SK-MEL-5 (cell line): ENCODE measurements at regions of chr3 and their contacts with region 1.

Region 1: GRCh38 chr3:73056014-73056844 is 5.2 kb upstream of the EBLN2 start:
- DNase-seq: peak; percentile 67

Region 2: DNA sequence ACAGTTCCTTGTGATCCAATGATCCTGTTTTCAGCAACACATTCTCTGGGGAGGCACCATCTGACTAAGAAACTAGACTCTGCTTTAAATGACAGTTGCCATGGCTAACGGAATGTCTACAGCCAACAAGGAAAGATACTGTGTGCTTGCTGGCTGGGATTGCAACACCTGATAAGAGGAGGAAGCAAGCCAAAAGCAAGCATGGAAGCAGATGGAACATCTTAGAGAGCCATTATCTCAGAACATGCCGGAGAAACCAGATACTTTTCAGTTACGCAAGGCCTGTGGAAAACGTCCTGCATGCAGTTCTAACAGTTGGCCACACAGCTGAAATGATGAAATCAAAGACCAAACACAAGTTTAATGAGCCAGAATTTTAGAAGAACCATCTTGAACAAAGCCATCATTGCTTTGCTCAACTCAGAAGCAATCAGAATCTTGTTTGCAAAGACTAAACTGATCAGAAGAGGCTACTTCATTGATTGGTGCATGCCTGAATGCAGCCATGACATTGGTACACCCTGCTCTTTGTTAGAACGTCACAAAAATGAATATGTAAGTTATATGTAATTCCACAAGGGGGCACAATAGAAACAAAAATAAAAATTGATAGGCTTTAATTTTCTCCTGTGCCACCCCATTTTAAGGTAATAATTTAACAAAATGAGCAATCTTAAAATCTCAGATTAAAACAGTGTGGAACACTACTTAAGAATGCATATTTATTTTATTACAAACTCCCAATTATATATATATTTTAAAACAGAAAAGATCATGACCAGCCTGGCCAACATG is 117.6 kb before region 1 on chr3:
- in situ Hi-C with region 1: loop called (anchors 25 kb)
- DNase-seq: peak; percentile 83

Region 3: DNA sequence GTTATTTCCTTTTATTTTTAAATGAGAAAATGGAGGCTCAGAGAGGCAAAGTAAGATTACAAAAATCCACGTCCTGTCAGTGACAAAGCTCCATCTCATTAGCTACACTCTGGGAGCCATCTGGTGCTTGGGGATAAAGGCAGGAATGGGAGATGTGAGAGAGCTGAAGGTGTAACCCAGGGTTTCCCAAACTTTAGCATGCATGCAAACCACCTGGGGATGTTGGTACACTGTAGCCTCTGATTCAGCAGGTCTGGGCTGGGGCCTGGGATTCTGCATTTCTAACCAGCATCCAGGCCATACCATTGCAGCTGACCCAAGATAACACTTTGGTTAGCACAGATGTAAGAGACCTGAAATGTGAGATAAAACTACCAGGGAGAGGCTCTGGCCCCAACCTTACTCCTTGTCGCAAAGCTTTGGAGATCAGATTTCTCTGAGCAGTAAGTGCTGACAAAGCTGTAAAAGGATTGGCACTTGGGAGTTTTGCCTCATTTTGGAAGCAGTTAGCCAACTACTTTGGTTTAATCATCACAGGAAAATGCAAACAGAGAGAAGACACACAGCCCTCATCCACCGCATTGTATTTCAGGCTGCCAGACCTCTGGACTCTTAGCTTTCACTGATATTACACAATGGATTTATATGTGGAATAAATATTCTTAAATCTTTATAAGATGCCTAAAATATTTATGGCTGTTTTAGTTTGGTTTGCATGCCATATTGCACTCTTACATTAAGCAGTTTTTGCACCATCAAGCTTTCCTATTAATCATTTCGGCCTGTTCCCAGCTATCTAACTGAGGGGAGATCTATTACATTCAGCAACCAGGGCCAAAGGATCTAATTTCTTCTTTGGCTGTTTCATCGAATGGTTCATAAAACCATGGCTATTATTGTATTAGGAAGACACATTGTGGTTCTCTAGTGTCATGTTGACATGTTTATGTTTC is 268.2 kb after region 1 on chr3:
- in situ Hi-C with region 1: no loop called
- DNase-seq: no peak